B cell (primary cell): ENCODE measurements at regions of chr14 and their contacts with region 1.

Region 1: DNA sequence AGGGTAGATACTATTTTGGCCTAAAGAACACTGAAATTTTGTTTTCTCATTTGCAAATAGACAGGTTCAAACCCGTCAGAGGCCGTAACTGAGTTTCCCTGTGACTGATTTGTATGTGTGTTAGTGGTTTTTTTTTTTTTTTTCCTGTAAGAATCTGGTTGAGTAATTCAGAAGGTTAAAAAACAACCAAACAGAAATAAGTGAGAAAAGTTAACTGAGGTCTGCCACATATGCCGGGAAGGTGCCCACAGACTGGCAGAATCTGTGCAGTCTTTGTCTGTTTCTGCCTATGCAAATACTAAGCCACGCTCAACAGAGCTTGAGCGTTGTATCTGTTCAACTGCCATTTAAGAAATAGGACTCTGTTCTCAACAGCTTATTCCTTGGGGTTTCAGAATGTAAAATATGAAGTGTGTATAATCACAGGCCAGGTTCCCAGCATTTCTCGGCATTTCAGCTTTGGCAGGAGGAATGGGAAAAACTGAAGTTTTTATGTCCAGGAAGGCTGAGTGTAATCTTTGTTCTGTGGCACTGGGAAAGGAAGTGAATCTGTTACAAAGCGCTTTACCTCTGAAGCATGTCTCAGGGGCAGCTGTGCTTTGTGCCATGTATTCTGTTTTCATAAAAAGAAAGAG is 181.9 kb downstream of the PRKCH start:
- DNase-seq: peak; percentile 90
- ATAC-seq: peak; percentile 92
- H3K4me3 ChIP-seq: peak overlapping the region in 4 of 5 experiments; percentile 11 to 55 (median 34)
- H3K4me3 Mint-ChIP-seq: peak overlapping the region; percentile 84
- H3K27ac ChIP-seq: peak overlapping the region; percentile 89 to 91
- H3K27ac Mint-ChIP-seq: peak overlapping the region; percentile 98
- H3K4me1 ChIP-seq: peaks cover 85 to 90% of the 10 kb centered on the region in 2 donors
- H3K4me1 Mint-ChIP-seq: peaks cover 88% of the 10 kb centered on the region
- H3K27me3 ChIP-seq: no peaks in the 10 kb centered on the region
- H3K27me3 Mint-ChIP-seq: no peaks in the 10 kb centered on the region
- CTCF ChIP-seq: no peak

Region 2: GRCh38 chr14:61493239-61493638 is 10.0 kb before region 1 on chr14:
- CTCF ChIA-PET with region 1: interaction called, 14 read pairs
- POLR2A ChIA-PET with region 1: interaction called, 13 read pairs
- intact Hi-C with region 1: no loop called
- DNase-seq: no peak
- ATAC-seq: no peak
- H3K4me3 ChIP-seq: no peak overlapping the region
- H3K4me3 Mint-ChIP-seq: no peak overlapping the region
- H3K27ac ChIP-seq: no peak overlapping the region
- H3K27ac Mint-ChIP-seq: no peak overlapping the region
- H3K4me1 ChIP-seq: peaks cover 24 to 29% of the 10 kb centered on the region in 2 donors
- H3K4me1 Mint-ChIP-seq: peaks cover 25% of the 10 kb centered on the region
- H3K27me3 ChIP-seq: no peaks in the 10 kb centered on the region
- H3K27me3 Mint-ChIP-seq: no peaks in the 10 kb centered on the region
- CTCF ChIP-seq: no peak

Region 3: GRCh38 chr14:61553725-61554641 is 50.7 kb after region 1 on chr14:
- CTCF ChIA-PET with region 1: interaction called, 11 read pairs
- POLR2A ChIA-PET with region 1: interaction called, 5 read pairs
- intact Hi-C with region 1: loop called (anchors 1 kb)
- DNase-seq: no peak
- ATAC-seq: no peak
- H3K4me3 ChIP-seq: peak overlapping the region in 1 of 5 experiments; percentile 4
- H3K4me3 Mint-ChIP-seq: peak overlapping the region; percentile 85
- H3K27ac ChIP-seq: peak overlapping the region; percentile 74 to 81
- H3K27ac Mint-ChIP-seq: peak overlapping the region; percentile 98
- H3K4me1 ChIP-seq: peaks cover 32 to 47% of the 10 kb centered on the region in 2 donors
- H3K4me1 Mint-ChIP-seq: peaks cover 58% of the 10 kb centered on the region
- H3K27me3 ChIP-seq: no peaks in the 10 kb centered on the region
- H3K27me3 Mint-ChIP-seq: no peaks in the 10 kb centered on the region
- CTCF ChIP-seq: no peak

Region 4: DNA sequence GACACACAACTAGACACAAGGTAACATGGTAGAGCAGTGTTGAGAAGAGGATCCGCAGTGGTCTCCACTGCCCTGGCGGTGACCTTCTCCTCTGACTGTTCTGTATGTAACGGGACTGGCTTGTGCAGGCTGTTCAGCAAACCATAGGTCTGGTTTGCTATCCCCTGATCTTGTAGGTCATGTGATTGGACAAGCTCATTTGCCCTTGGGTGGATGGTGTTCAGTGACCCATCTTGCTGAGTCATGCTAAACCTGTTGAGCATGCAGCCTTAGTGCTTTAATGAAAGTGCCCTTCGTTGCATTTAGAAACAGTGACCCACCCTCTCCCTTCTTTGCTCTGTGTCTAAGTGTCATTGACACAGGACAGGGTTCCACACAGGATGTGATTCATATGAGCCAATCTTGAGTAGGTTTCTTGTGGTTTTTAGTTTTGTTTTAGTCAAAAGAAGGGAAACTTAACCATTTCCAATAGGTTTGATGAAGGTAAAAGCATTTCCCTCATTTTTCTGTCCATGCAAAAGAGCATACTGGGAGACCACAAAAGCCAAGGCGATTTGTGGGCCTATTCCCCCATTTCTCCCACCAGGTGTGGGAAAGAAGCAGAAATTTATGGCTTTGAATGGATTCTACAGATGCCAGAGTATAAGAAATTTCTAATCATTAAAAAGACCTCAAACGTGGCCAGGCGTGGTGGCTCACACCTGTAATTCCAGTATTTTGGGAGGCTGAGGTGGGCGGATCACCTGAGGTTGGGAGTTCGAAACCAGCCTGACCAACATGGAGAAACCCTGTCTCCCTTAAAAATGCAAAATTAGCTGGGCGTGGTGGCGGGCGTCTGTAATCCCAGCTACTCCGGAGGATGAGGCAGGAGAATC is 159.4 kb after region 1 on chr14:
- CTCF ChIA-PET with region 1: no interaction called
- POLR2A ChIA-PET with region 1: interaction called, 6 read pairs
- intact Hi-C with region 1: loop called (anchors 2 kb)
- DNase-seq: peak; percentile 59
- ATAC-seq: peak; percentile 66
- H3K4me3 ChIP-seq: peak overlapping the region in 1 of 5 experiments; percentile 52
- H3K4me3 Mint-ChIP-seq: peak overlapping the region; percentile 84
- H3K27ac ChIP-seq: peak overlapping the region; percentile 48 to 82
- H3K27ac Mint-ChIP-seq: peak overlapping the region; percentile 91
- H3K4me1 ChIP-seq: peaks cover 59 to 60% of the 10 kb centered on the region in 2 donors
- H3K4me1 Mint-ChIP-seq: peaks cover 59% of the 10 kb centered on the region
- H3K27me3 ChIP-seq: no peaks in the 10 kb centered on the region
- H3K27me3 Mint-ChIP-seq: no peaks in the 10 kb centered on the region
- CTCF ChIP-seq: no peak

Region 5: DNA sequence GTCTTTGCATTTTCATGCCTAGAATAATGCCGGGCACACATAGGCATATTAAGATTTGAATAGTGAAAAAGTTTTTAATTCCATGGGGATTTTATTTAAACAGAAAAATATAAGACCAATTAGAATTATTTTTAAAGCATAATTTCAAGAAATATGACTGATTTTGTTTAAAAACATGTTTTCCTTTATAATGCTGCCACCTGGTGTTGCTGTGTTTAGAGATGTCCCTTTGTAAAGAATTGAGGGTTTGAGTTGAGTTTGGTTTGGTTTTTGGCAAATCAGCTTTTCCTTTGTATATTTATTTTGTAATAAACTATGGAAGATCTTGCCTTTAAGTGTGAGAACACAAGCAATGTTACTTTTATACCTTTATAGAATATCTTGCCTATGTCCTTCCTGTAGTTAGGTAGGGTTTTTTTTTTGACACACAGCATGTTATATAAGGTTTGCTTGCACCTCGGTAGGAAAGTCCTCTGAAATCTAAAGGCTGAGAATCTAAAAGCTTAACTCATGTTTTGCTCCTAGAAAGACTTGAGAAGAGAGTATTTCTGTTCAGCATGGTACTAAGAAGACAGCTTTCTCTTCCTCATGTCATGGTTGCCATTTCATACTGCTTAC is 227.6 kb after region 1 on chr14:
- CTCF ChIA-PET with region 1: interaction called, 11 read pairs
- POLR2A ChIA-PET with region 1: interaction called, 3 read pairs
- intact Hi-C with region 1: loop called (anchors 1 kb)
- DNase-seq: peak; percentile 51
- ATAC-seq: no peak
- H3K4me3 ChIP-seq: no peak overlapping the region
- H3K4me3 Mint-ChIP-seq: no peak overlapping the region
- H3K27ac ChIP-seq: peak overlapping the region in 1 of 2 donors; percentile 50
- H3K27ac Mint-ChIP-seq: peak overlapping the region; percentile 68
- H3K4me1 ChIP-seq: peaks cover 12% of the 10 kb centered on the region in 2 donors
- H3K4me1 Mint-ChIP-seq: peaks cover 42% of the 10 kb centered on the region
- H3K27me3 ChIP-seq: no peaks in the 10 kb centered on the region
- H3K27me3 Mint-ChIP-seq: no peaks in the 10 kb centered on the region
- CTCF ChIP-seq: peak; percentile 68